Panc1 (cell line): ENCODE measurements at regions of chr15 and their contacts with region 1.

Region 1: GRCh38 chr15:91055548-91056331 is 33.3 kb upstream of the VPS33B start:
- DNase-seq: peak; percentile 68
- ATAC-seq: peak; percentile 97
- H3K4me3 ChIP-seq: no peak overlapping the region
- H3K27ac ChIP-seq: no peak overlapping the region
- H3K4me1 ChIP-seq: no peaks in the 10 kb centered on the region
- H3K27me3 ChIP-seq: peaks cover 33% of the 10 kb centered on the region
- CTCF ChIP-seq: peak; percentile 88

Region 2: GRCh38 chr15:90869601-90870353 is 186.0 kb before region 1 on chr15:
- CTCF ChIA-PET with region 1: no interaction called
- POLR2A ChIA-PET with region 1: no interaction called
- in situ Hi-C with region 1: no loop called
- intact Hi-C with region 1: no loop called
- DNase-seq: no peak
- ATAC-seq: peak; percentile 61
- H3K4me3 ChIP-seq: no peak overlapping the region
- H3K27ac ChIP-seq: peak overlapping the region; percentile 95
- H3K4me1 ChIP-seq: peaks cover 73% of the 10 kb centered on the region
- H3K27me3 ChIP-seq: no peaks in the 10 kb centered on the region
- CTCF ChIP-seq: no peak

Region 3: DNA sequence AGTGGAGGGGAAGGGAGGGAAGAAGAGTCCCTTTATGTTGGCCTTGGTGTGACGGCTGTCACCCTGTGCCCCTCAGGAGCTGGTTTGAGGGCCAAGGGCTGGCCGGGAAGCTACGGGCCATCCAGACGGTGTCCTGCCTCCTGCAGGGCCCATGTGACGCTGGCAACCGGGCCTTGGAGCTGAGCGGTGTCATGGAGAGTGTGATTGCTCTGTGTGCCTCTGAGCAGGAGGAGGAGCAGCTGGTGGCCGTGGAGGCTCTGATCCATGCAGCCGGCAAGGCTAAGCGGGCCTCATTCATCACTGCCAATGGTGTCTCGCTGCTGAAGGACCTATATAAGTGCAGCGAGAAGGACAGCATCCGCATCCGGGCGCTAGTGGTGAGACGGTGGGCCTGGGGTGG is 109.2 kb before region 1 on chr15:
- CTCF ChIA-PET with region 1: no interaction called
- POLR2A ChIA-PET with region 1: no interaction called
- in situ Hi-C with region 1: no loop called
- intact Hi-C with region 1: no loop called
- DNase-seq: no peak
- ATAC-seq: no peak
- H3K4me3 ChIP-seq: no peak overlapping the region
- H3K27ac ChIP-seq: no peak overlapping the region
- H3K4me1 ChIP-seq: peaks cover 6% of the 10 kb centered on the region
- H3K27me3 ChIP-seq: no peaks in the 10 kb centered on the region
- CTCF ChIP-seq: no peak

Region 4: GRCh38 chr15:91224755-91225380 is 169.1 kb after region 1 on chr15:
- CTCF ChIA-PET with region 1: no interaction called
- POLR2A ChIA-PET with region 1: no interaction called
- in situ Hi-C with region 1: no loop called
- intact Hi-C with region 1: loop called (anchors 1 kb)
- DNase-seq: peak; percentile 57
- ATAC-seq: peak; percentile 89
- H3K4me3 ChIP-seq: no peak overlapping the region
- H3K27ac ChIP-seq: no peak overlapping the region
- H3K4me1 ChIP-seq: no peaks in the 10 kb centered on the region
- H3K27me3 ChIP-seq: peaks cover 11% of the 10 kb centered on the region
- CTCF ChIP-seq: peak; percentile 87

Region 5: DNA sequence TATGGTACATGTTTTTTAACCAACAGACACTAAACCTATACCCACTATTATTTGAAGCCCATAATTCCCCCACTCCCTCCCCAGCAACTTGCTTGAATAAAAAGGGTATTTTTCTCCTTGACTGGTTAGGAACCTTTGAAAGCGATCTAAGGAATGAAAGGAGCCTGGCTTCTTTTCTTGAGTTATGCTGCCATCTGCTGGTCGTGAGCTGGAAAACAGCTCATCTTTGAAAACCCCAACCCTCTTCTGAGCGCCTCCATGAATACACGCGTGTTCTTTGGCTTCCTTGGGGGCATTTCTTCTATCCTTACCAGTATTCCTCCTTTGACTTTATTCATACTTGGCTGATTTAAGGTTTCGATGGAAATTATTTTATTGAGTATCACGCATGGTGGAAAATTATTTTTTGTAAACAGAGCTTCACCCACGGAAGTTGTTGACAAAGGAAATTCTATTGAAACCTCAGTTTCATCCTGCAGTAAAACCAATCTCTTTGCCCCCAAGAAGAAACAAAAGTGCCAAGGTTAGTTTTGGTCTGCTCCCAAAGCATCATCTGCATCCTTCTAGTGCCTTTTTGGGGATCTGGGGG is 215.9 kb after region 1 on chr15:
- CTCF ChIA-PET with region 1: interaction called, 31 read pairs
- POLR2A ChIA-PET with region 1: no interaction called
- in situ Hi-C with region 1: no loop called
- intact Hi-C with region 1: loop called (anchors 1 kb)
- DNase-seq: peak; percentile 52
- ATAC-seq: peak; percentile 92
- H3K4me3 ChIP-seq: no peak overlapping the region
- H3K27ac ChIP-seq: no peak overlapping the region
- H3K4me1 ChIP-seq: no peaks in the 10 kb centered on the region; the same call in 1 of the 2 replicates
- H3K27me3 ChIP-seq: peaks cover 11% of the 10 kb centered on the region; the same call in 1 of the 2 replicates
- CTCF ChIP-seq: peak; percentile 84